Gastrocnemius medialis (tissue), 4 donors: ENCODE measurements at regions of chr12 and their contacts with region 1.

Region 1: GRCh38 chr12:104108755-104109445 is 29.1 kb downstream of the NFYB start:
- DNase-seq: peak; percentile 60 to 85
- ATAC-seq: peak; percentile 91 to 99
- H3K4me3 ChIP-seq: no peak overlapping the region
- H3K27ac ChIP-seq: peak overlapping the region; percentile 17 to 55 (median 28)
- H3K4me1 ChIP-seq: peaks cover 13 to 15% of the 10 kb centered on the region in 2 donors
- H3K27me3 ChIP-seq: no peaks in the 10 kb centered on the region
- CTCF ChIP-seq: peak; percentile 62 to 90 (median 75)
- POLR2A ChIP-seq: no peak

Region 2: GRCh38 chr12:103884316-103884715 is 224.6 kb before region 1 on chr12:
- in situ Hi-C with region 1: loop called in 3 of 4 experiments (anchors 5 to 10 kb)
- intact Hi-C with region 1: no loop called
- DNase-seq: no peak
- ATAC-seq: no peak
- H3K4me3 ChIP-seq: no peak overlapping the region
- H3K27ac ChIP-seq: no peak overlapping the region
- H3K4me1 ChIP-seq: peaks cover 0 to 5% of the 10 kb centered on the region in 2 donors
- H3K27me3 ChIP-seq: no peaks in the 10 kb centered on the region
- CTCF ChIP-seq: peak in 2 of 5 experiments; percentile 2 to 45
- POLR2A ChIP-seq: no peak

Region 3: DNA sequence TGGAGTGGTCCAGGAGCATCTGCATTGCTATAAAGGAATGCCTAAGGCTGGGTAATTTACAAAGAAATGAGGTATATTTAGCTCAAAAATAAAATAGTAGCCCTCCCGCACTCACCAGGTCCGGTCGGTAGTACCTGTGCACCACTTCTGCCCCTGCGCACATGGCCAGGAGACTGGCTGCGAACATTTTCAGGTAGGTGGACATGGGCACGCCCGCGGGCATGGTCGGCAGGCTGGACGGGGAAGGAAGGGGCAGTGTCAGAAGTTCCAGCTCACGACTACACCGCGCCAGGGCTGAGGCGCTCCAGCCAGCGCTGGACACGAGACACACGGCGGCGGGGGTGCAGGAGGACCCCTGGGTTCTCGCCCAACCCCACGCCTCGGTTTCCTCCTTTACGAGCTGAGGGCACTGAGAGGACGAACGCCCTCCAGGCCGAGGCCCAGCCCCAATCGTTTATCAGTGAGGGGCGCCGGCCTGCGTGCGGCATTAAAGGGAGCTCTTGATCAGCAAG is 152.3 kb before region 1 on chr12:
- in situ Hi-C with region 1: no loop called
- intact Hi-C with region 1: loop called (anchors 2 kb)
- DNase-seq: peak in 1 of 2 donors; percentile 34
- ATAC-seq: peak; percentile 36 to 38
- H3K4me3 ChIP-seq: peak overlapping the region; percentile 76 to 87 (median 82)
- H3K27ac ChIP-seq: peak overlapping the region; percentile 81 to 92 (median 92)
- H3K4me1 ChIP-seq: peaks cover 22 to 25% of the 10 kb centered on the region in 2 donors
- H3K27me3 ChIP-seq: no peaks in the 10 kb centered on the region
- CTCF ChIP-seq: no peak
- POLR2A ChIP-seq: no peak

Region 4: DNA sequence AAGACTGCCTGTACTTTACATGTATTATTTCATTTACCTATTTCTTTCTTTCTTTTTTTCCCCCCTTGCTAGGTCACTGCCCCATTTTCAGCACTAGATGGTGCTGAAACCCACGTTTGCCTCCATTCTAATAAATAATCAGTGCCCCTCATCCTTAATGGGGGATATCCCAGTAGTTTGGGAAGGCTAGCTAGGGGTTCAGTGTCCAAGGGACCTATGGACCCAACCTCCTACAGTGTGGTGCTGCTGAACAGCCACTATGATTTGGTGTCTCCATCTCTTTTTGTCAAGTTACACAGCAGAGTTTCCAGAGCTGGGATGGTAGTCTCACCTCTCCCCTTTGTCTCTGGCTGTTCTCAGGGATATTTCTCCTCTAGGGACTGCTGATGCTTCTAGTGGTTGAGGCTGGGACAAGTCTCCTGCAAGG is 51.1 kb before region 1 on chr12:
- in situ Hi-C with region 1: loop called in 1 of 4 experiments (anchors 5 kb)
- intact Hi-C with region 1: no loop called
- DNase-seq: no peak
- ATAC-seq: no peak
- H3K4me3 ChIP-seq: no peak overlapping the region
- H3K27ac ChIP-seq: no peak overlapping the region
- H3K4me1 ChIP-seq: peaks cover 0 to 11% of the 10 kb centered on the region in 2 donors
- H3K27me3 ChIP-seq: no peaks in the 10 kb centered on the region
- CTCF ChIP-seq: peak in 4 of 5 experiments; percentile 16 to 67 (median 44)
- POLR2A ChIP-seq: no peak